GM12878 (cell line): ENCODE measurements at regions of chr6 and their contacts with region 1.

Region 1: GRCh38 chr6:20056350-20056992 is 155.8 kb downstream of the MBOAT1 start:
- DNase-seq: peak; percentile 8
- ATAC-seq: peak; percentile 65
- H3K4me3 ChIP-seq: no peak overlapping the region
- H3K27ac ChIP-seq: no peak overlapping the region
- H3K4me1 ChIP-seq: no peaks in the 10 kb centered on the region
- H3K27me3 ChIP-seq: no peaks in the 10 kb centered on the region
- CTCF ChIP-seq: peak; percentile 30 to 55 (median 35); a peak in 5 of 6 replicates
- EP300 ChIP-seq: no peak
- POLR2A ChIP-seq: no peak
- RAD21 ChIP-seq: peak; percentile 62

Region 2: DNA sequence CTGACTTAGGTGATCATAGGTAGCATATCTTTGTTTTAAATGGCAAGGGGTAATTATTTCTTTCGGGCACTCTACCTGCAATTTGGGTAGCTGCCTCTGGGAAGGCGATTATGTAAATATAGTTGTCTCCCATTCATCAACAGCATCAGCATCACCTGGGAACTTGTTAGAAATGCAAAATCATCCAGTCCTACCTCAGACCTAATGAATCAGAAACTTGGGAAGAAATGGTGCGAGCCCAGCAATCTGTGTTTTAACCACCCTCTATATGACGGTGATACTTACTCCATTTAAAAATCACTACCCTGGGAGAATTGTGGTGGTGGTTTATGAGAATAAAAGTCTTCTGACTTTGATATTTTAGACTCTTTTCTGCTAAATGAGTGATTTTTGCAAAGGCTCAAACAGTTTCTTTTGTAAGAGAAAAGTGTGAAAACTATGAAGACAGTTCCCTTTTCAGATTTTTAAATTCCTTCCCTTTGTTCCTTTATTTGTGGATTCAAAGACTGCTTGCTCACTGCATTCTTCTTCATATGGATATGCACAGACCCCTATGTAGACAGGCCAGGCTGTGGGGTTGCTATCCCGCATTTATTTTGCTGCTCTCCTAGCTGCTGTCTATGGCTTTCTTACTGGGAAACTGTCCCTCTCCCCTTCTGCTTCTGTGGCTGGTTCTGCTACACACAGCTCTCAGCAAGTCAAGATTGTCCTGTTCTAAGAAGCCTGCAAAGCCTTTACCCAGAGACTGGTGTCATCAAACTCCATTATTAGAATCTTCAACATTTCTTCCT is 1304.0 kb before region 1 on chr6:
- CTCF ChIA-PET with region 1: interaction called, 11 read pairs
- POLR2A ChIA-PET with region 1: no interaction called
- RAD21 ChIA-PET with region 1: interaction called, 3 read pairs
- SMC1A ChIA-PET with region 1: no interaction called
- in situ Hi-C with region 1: no loop called
- intact Hi-C with region 1: loop called (anchors 5 kb)
- DNase-seq: no peak
- ATAC-seq: no peak
- H3K4me3 ChIP-seq: no peak overlapping the region
- H3K27ac ChIP-seq: no peak overlapping the region
- H3K4me1 ChIP-seq: no peaks in the 10 kb centered on the region
- H3K27me3 ChIP-seq: no peaks in the 10 kb centered on the region; a peak in 1 of 4 replicates
- CTCF ChIP-seq: no peak
- EP300 ChIP-seq: no peak
- POLR2A ChIP-seq: no peak
- RAD21 ChIP-seq: no peak

Region 3: GRCh38 chr6:18997375-18997826 is 1059.1 kb before region 1 on chr6:
- CTCF ChIA-PET with region 1: no interaction called
- POLR2A ChIA-PET with region 1: no interaction called
- RAD21 ChIA-PET with region 1: no interaction called
- SMC1A ChIA-PET with region 1: interaction called, 3 read pairs
- in situ Hi-C with region 1: loop called (anchors 10 kb)
- intact Hi-C with region 1: loop called (anchors 2 kb)
- DNase-seq: no peak
- ATAC-seq: peak; percentile 97
- H3K4me3 ChIP-seq: no peak overlapping the region
- H3K27ac ChIP-seq: no peak overlapping the region
- H3K4me1 ChIP-seq: no peaks in the 10 kb centered on the region
- H3K27me3 ChIP-seq: no peaks in the 10 kb centered on the region; a peak in 1 of 4 replicates
- CTCF ChIP-seq: peak; percentile 57 to 60 (median 58); a peak in 5 of 6 replicates
- EP300 ChIP-seq: no peak
- POLR2A ChIP-seq: no peak
- RAD21 ChIP-seq: peak; percentile 36

Region 4: DNA sequence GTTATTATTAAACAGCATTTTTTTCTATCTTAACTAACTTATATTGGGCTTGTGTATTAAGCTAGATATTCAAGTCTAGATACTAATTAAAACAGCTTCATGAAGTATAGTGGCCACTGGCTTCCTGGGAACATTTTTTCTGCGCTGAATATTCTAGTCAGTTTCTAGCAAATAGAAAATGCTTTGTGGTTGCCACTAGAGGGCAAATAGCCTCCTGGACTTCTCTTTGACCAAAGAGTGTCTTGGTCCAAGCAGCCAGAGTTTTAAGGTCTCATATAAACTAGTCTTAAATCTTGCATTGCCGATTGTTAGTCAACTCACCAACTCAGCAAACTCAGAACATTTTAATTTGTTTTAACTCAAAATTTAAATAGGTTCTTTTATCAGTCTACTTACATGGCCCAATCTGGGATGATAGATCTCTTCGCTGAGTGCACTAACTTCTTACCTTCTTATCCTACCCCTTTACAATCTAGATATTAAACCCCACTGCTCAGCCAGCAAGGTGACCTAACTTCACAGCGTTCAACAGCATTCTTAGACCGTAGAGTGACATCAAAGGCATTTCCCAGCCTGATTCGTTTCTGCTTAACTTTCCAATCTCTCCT is 243.9 kb before region 1 on chr6:
- CTCF ChIA-PET with region 1: no interaction called
- POLR2A ChIA-PET with region 1: no interaction called
- RAD21 ChIA-PET with region 1: no interaction called
- SMC1A ChIA-PET with region 1: no interaction called
- in situ Hi-C with region 1: no loop called
- intact Hi-C with region 1: loop called (anchors 5 kb)
- DNase-seq: no peak
- ATAC-seq: no peak
- H3K4me3 ChIP-seq: no peak overlapping the region
- H3K27ac ChIP-seq: no peak overlapping the region
- H3K4me1 ChIP-seq: no peaks in the 10 kb centered on the region
- H3K27me3 ChIP-seq: no peaks in the 10 kb centered on the region
- CTCF ChIP-seq: peak; percentile 25 to 43 (median 41); a peak in 5 of 6 replicates
- EP300 ChIP-seq: no peak
- POLR2A ChIP-seq: no peak
- RAD21 ChIP-seq: no peak

Region 5: DNA sequence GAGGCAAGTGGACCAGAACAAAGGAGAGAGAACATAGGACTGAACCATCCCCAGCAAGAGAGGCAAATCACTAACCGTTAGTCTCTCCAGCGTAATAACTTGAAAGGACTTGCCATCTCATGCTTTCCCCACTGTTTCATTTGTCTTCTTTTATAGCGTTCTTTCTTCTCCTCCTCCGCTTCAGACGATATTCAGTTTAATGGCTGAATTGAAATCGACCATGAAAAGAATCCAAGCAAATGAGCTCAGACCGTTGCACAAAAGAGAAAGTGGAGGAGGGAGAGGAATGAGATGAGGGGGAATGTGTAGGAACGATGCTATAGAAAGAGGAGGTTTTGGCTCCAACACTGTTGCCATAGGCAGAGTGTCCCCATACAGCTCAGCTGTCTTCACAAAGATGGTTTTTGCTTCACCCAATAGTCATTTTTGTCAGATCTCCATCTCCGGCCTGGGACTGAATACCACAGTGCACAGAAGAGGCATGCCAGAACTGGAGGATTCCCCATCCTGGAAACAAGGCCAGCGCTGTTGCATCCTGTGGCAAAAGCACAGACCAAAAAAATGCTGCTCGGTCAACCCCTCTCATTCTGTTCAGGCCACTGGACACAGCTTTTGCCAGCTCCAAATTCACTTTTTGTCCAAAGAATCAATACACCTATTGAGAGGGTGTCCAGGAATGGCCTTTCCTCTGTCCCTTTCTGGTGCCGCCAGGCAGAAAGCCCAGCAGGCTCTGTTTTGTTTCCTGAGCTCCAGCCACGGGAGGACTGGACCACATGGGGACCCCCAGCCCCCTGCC is 43.2 kb before region 1 on chr6:
- CTCF ChIA-PET with region 1: no interaction called
- POLR2A ChIA-PET with region 1: no interaction called
- RAD21 ChIA-PET with region 1: no interaction called
- SMC1A ChIA-PET with region 1: no interaction called
- in situ Hi-C with region 1: no loop called
- intact Hi-C with region 1: no loop called
- DNase-seq: no peak
- ATAC-seq: no peak
- H3K4me3 ChIP-seq: no peak overlapping the region
- H3K27ac ChIP-seq: no peak overlapping the region
- H3K4me1 ChIP-seq: no peaks in the 10 kb centered on the region
- H3K27me3 ChIP-seq: no peaks in the 10 kb centered on the region
- CTCF ChIP-seq: no peak
- EP300 ChIP-seq: no peak
- POLR2A ChIP-seq: no peak
- RAD21 ChIP-seq: no peak